K562 (cell line): ENCODE measurements at regions of chr12 and their contacts with region 1.

Region 1: GRCh38 chr12:25557830-25558436 is 4.8 kb upstream of the LMNTD1 start:
- DNase-seq: peak; percentile 13 to 44 (median 20)
- ATAC-seq: no peak
- H3K4me3 ChIP-seq: no peak overlapping the region
- H3K27ac ChIP-seq: no peak overlapping the region
- H3K4me1 ChIP-seq: no peaks in the 10 kb centered on the region
- H3K27me3 ChIP-seq: no peaks in the 10 kb centered on the region
- CTCF ChIP-seq: peak; percentile 21 to 60 (median 42); a peak in 3 of 6 replicates
- EP300 ChIP-seq: no peak
- POLR2A ChIP-seq: no peak
- RAD21 ChIP-seq: peak; percentile 44 to 66

Region 2: DNA sequence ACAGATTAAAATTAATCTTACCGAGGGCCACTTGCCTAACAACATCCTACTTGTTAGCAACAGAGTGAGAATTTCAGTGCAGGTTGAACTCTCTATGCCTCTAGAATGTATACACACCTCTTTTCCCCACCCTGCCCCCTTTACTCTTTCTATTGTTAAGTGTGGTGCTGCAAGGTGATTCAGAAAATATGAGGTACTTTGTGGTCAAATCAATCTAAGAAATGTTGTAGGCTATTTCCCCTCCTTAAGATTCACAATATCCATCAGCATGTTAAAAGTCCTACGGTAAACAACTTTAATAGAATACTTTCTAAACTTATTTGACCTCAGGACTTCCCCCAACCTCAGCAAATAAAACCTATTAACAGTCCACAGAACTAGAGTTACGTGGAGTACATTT is 110.9 kb before region 1 on chr12:
- CTCF ChIA-PET with region 1: no interaction called
- POLR2A ChIA-PET with region 1: no interaction called
- in situ Hi-C with region 1: no loop called
- intact Hi-C with region 1: loop called (anchors 10 kb)
- DNase-seq: no peak
- ATAC-seq: no peak
- H3K4me3 ChIP-seq: no peak overlapping the region
- H3K27ac ChIP-seq: no peak overlapping the region
- H3K4me1 ChIP-seq: no peaks in the 10 kb centered on the region
- H3K27me3 ChIP-seq: peaks cover 0 to 1% of the 10 kb centered on the region in 2 experiments; a peak in 1 of 5 replicates
- CTCF ChIP-seq: no peak
- EP300 ChIP-seq: no peak
- POLR2A ChIP-seq: no peak
- RAD21 ChIP-seq: no peak

Region 3: GRCh38 chr12:25469861-25470260 is 88.1 kb before region 1 on chr12:
- CTCF ChIA-PET with region 1: no interaction called
- POLR2A ChIA-PET with region 1: no interaction called
- in situ Hi-C with region 1: no loop called
- intact Hi-C with region 1: no loop called
- DNase-seq: no peak
- ATAC-seq: no peak
- H3K4me3 ChIP-seq: no peak overlapping the region
- H3K27ac ChIP-seq: no peak overlapping the region
- H3K4me1 ChIP-seq: no peaks in the 10 kb centered on the region
- H3K27me3 ChIP-seq: peaks cover 0 to 4% of the 10 kb centered on the region in 2 experiments; a peak in 1 of 5 replicates
- CTCF ChIP-seq: no peak
- EP300 ChIP-seq: no peak
- POLR2A ChIP-seq: no peak
- RAD21 ChIP-seq: no peak